PC-9 (cell line): ENCODE measurements at regions of chrX and their contacts with region 1.

Region 1: DNA sequence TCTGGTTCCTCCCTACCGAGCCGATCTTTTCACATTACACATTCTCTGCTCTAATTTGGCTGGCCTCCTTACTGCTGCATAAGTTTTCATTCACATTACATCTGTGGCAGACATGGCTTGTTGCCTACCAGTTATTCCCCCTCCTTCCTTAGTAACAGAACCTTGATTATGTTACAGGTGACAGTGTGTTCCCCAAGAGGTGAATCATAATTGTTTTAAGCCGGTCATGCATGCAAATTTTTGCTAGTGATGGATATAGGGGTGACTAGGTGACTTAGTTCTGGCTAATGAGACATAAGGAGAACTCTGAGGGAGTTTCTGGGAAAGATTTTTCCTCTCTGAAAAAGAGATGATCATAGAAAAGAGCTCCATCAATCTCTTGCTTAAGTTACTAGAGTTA is 8.4 kb upstream of the LAMP2 start:
- DNase-seq: peak in 1 of 2 experiments; percentile 50
- H3K4me3 ChIP-seq: no peak overlapping the region
- H3K27ac ChIP-seq: no peak overlapping the region
- H3K4me1 ChIP-seq: no peaks in the 10 kb centered on the region; the same call in 1 of the 2 replicates
- H3K27me3 ChIP-seq: no peaks in the 10 kb centered on the region
- CTCF ChIP-seq: no peak

Region 2: DNA sequence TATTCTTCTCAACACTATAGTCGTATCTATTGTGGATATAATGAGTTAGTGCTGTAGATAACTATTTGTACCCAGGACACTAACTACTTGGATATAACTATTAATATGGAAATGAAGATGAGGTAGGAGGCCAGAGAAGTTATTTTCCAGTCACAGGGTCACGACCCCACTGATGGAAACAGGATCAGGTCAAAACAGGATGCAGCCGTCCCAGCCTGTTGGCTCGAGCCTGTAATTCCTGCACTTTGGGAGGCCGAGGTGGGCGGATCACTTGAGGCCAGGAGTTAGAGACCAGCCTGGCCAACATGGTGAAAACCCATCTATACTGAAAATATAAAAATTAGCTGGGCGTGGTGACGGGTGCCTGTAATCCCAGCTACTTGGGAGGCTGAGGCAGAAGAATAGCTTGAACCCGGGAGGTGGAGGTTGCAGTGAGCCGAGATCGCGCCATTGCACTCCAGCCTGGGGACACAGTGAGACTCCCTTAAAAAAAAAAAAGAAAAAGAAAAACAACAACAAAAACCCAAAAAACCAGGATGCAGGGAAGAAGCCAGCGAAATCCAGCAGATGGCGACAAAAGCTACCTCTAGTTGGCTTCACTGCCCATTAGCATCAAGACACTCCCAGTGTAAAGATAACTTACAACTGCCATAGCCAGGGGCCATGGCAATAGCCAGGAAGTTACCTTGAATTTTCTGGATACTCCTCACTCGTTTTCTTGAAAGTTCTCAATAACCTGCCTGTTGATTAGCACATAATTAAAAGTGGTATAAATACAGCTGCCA is 496.0 kb before region 1 on chrX:
- CTCF ChIA-PET with region 1: no interaction called
- POLR2A ChIA-PET with region 1: no interaction called
- intact Hi-C with region 1: loop called (anchors 10 kb)
- DNase-seq: peak in 1 of 2 experiments; percentile 41
- H3K4me3 ChIP-seq: no peak overlapping the region
- H3K27ac ChIP-seq: no peak overlapping the region
- H3K4me1 ChIP-seq: no peaks in the 10 kb centered on the region
- H3K27me3 ChIP-seq: no peaks in the 10 kb centered on the region
- CTCF ChIP-seq: peak; percentile 61

Region 3: GRCh38 chrX:120000490-120001246 is 476.8 kb before region 1 on chrX:
- CTCF ChIA-PET with region 1: interaction called, 10 read pairs
- POLR2A ChIA-PET with region 1: no interaction called
- intact Hi-C with region 1: no loop called
- DNase-seq: no peak
- H3K4me3 ChIP-seq: no peak overlapping the region
- H3K27ac ChIP-seq: no peak overlapping the region
- H3K4me1 ChIP-seq: no peaks in the 10 kb centered on the region
- H3K27me3 ChIP-seq: peaks cover 30% of the 10 kb centered on the region
- CTCF ChIP-seq: no peak

Region 4: DNA sequence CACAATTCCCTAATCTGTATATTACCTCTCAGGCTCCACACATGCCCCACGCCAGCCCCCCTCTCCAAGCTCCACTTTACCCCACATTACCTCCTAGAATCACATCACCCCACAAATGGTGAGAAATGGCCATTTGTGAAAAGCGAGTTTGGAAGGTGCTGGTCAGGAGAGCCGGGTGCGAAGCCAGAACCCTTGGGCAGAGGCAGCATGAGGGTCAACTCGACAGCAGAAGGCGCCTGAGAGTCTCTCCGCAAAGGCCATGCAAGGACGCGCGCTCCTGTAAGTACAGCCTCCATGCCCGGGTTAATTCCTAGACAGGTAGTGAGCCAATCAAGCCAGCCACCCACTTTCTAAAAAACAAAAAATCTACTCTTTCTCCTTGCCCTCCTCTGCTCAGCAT is 276.6 kb before region 1 on chrX:
- CTCF ChIA-PET with region 1: no interaction called
- POLR2A ChIA-PET with region 1: no interaction called
- intact Hi-C with region 1: no loop called
- DNase-seq: no peak
- H3K4me3 ChIP-seq: no peak overlapping the region
- H3K27ac ChIP-seq: no peak overlapping the region
- H3K4me1 ChIP-seq: peaks cover 3% of the 10 kb centered on the region; the same call in 1 of the 2 replicates
- H3K27me3 ChIP-seq: no peaks in the 10 kb centered on the region
- CTCF ChIP-seq: no peak

Region 5: GRCh38 chrX:120308959-120309872 is 168.2 kb before region 1 on chrX:
- CTCF ChIA-PET with region 1: no interaction called
- POLR2A ChIA-PET with region 1: interaction called, 3 read pairs
- intact Hi-C with region 1: loop called (anchors 2 kb)
- DNase-seq: peak in 1 of 2 experiments; percentile 75
- H3K4me3 ChIP-seq: peak overlapping the region; percentile 60
- H3K27ac ChIP-seq: no peak overlapping the region
- H3K4me1 ChIP-seq: 0 out of 2 replicates have a peak, but pooled peaks cover 3% of the 10 kb centered on the region
- H3K27me3 ChIP-seq: no peaks in the 10 kb centered on the region
- CTCF ChIP-seq: no peak; the same call in 1 of the 2 replicates

Region 6: GRCh38 chrX:120380699-120381098 is 96.8 kb before region 1 on chrX:
- CTCF ChIA-PET with region 1: no interaction called
- POLR2A ChIA-PET with region 1: no interaction called
- intact Hi-C with region 1: no loop called
- DNase-seq: peak in 1 of 2 experiments; percentile 40
- H3K4me3 ChIP-seq: no peak overlapping the region
- H3K27ac ChIP-seq: no peak overlapping the region
- H3K4me1 ChIP-seq: no peaks in the 10 kb centered on the region
- H3K27me3 ChIP-seq: peaks cover 23% of the 10 kb centered on the region; the same call in 1 of the 2 replicates
- CTCF ChIP-seq: peak; percentile 67

Region 7: DNA sequence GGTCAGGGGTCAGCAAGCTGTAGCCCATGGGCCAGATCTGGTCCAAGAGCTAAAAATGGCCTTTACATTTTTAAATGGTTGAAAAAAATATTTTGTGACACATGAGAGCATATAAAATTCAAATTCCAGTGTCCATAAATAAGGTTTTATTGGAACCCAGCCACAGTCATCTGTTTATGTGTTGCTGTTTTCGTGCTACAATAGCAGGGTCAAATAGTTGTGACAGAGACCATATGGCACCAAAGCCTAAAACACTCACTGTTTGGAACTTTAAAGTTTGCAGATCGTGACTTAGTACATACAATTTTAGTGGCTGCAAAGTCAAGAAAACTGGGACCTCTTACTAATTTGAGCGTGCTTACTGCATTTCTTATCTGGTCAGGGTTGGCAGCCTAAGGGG is 37.5 kb before region 1 on chrX:
- CTCF ChIA-PET with region 1: no interaction called
- POLR2A ChIA-PET with region 1: no interaction called
- intact Hi-C with region 1: no loop called
- DNase-seq: no peak
- H3K4me3 ChIP-seq: no peak overlapping the region
- H3K27ac ChIP-seq: no peak overlapping the region
- H3K4me1 ChIP-seq: no peaks in the 10 kb centered on the region
- H3K27me3 ChIP-seq: no peaks in the 10 kb centered on the region
- CTCF ChIP-seq: no peak

Region 8: DNA sequence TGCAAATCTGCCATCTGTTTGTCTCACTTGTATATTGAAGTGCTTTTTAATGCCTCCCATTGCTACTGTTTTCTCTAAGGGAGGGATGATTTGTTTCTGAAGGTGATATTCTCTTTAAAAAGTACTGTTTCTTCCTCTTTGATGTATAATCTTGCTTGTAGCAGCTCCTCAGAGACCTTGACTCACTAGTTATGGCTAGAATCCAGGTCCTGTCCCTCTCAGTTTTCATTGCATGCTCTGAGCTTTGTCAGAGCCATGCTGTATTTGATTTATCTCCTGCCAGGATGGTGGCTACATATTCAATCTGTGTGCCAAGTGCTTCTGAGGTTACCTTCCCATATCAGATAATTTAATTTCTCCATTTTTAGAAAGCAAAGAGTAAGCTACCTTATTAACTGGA is 625.9 kb after region 1 on chrX:
- CTCF ChIA-PET with region 1: no interaction called
- POLR2A ChIA-PET with region 1: interaction called, 10 read pairs
- intact Hi-C with region 1: no loop called
- DNase-seq: no peak
- H3K4me3 ChIP-seq: no peak overlapping the region
- H3K27ac ChIP-seq: no peak overlapping the region
- H3K4me1 ChIP-seq: no peaks in the 10 kb centered on the region
- H3K27me3 ChIP-seq: no peaks in the 10 kb centered on the region
- CTCF ChIP-seq: no peak

Region 9: DNA sequence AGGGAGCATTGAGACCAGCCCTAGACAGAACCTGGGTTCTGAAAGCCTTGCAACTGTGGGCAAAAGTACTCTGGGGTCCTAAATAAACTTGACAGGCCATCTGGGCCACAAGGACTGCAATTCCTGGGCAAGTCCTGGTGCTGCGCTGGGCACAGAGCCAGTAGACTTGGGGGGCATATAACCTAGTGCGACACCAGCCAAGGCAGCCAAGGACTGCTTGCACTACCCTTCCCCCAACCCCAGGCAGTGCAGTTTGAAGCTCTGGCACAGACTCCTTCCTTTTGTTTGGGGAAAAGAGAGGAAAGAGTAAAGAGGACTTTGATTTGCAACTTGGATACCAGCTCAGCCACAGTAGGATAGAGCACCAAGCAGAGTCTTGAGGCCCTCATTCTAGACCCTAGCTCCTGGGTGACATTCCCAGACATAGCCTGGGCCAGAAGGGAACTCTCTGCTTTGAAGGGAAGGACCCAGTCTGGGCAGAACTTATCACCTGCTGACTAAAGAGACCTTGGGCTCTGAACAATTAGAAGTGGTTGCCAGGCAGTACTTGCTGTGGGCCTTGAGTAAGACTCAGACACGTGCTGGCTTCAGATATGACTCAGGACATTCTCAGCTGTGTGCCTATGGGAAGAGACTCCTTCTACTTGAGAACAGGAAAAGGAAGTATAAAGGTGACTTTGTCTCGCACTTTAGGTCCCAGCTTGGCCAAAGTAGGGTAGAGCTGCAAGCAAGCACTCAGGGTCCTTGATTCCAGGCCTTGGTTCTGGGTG is 1092.8 kb after region 1 on chrX:
- CTCF ChIA-PET with region 1: no interaction called
- POLR2A ChIA-PET with region 1: no interaction called
- intact Hi-C with region 1: no loop called
- DNase-seq: no peak
- H3K4me3 ChIP-seq: no peak overlapping the region
- H3K27ac ChIP-seq: no peak overlapping the region
- H3K4me1 ChIP-seq: no peaks in the 10 kb centered on the region
- H3K27me3 ChIP-seq: no peaks in the 10 kb centered on the region
- CTCF ChIP-seq: no peak